ENCODE measurements at regions of chr12 and their contacts with region 1.

Region 1: GRCh38 chr12:124518051-124518932 is 49.1 kb downstream of the NCOR2 start:
- DNase-seq: peak; percentile 95 to 99
- ATAC-seq: peak; percentile 75 to 84
- H3K4me3 ChIP-seq: peak overlapping the region; percentile 53 to 59 (median 54)
- H3K27ac ChIP-seq: peak overlapping the region; percentile 90 to 99 (median 96)
- H3K4me1 ChIP-seq: peaks cover 83 to 94% of the 10 kb centered on the region in 2 donors
- H3K27me3 ChIP-seq: no peaks in the 10 kb centered on the region
- CTCF ChIP-seq: no peak
- POLR2A ChIP-seq: peak; percentile 45 to 65

Region 2: DNA sequence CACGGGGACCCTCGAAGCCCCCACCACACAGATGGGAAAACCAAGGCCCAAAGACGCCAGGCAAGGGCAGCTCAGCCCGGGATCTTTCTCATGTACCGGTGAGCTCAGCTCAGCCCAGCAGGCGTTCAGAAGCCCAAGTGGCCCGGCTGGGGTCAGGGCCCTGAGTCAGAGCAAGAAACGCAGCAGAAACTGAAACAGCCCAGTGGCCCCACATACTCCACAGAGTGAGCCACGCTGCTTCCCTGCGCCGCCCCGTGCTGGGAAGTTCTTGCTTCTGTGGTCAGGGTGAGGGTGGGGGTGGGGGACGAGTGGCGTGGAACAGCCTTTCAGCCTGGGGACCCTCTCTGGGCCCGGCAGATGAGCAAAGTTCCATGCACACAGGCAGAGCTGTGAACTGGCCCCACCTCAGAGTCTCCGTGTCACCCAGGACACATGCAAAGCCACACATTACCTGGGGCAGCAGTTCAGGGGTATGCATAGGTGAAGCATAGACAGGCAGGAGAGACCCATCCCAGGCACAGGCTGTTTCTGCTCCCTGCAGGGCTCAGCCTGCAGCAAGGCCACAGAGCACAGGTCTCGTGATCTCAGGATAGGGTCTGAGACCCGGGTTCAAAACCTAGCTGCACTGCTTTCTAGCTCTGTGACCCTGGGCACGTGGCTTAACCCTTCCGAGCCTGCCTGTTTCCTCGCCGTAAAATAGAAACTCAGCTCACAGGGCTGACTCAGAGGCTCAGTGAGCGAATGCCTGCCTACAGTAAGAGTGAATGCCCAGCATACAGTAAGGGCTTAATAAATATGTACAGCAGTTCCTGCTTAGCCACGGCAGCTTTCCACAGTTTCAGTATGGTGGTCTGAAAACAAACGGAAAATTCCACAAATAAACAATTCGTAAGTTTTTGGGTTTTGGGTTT is 27.5 kb after region 1 on chr12:
- in situ Hi-C with region 1: no loop called
- intact Hi-C with region 1: no loop called
- DNase-seq: no peak
- ATAC-seq: no peak
- H3K4me3 ChIP-seq: no peak overlapping the region
- H3K27ac ChIP-seq: no peak overlapping the region
- H3K4me1 ChIP-seq: peaks cover 43 to 59% of the 10 kb centered on the region in 2 donors
- H3K27me3 ChIP-seq: no peaks in the 10 kb centered on the region
- CTCF ChIP-seq: no peak
- POLR2A ChIP-seq: no peak

Region 3: DNA sequence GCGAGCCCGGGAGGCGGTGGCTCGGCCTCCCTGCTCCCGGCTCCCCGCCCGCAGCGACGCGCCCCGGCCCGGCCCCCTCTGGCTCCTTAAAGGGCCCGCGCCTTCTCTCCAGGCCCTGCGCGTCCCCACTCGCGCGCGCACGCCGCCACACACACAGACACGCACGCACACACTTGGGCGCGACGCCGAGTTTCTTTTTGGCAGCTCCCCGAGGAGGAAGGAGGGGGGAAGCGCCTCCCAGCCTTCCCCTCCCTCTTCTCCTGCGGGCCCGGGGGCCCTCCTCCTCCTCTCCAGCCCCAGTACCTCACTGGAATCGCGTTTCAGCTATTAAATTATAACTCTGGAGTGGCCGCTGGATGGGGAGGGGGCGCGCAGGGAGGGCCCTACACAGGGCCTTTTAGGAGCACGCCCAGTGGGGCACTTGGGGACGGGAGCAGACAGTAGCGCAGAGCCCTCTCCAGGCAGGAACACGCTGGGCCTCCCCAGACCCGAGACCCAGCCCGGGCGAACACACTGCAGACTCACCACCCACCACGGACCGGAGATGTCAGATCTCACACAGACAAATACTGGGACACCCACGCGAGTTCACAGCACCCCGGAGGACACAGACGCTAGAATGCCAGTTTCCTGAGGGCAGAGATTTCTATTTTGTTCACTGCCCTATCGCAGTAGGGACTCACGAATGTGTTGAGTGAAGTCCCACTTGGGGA is 49.5 kb after region 1 on chr12:
- in situ Hi-C with region 1: no loop called
- intact Hi-C with region 1: loop called (anchors 2 kb)
- DNase-seq: peak; percentile 81 to 86
- ATAC-seq: peak; percentile 76 to 79
- H3K4me3 ChIP-seq: peak overlapping the region; percentile 58 to 93 (median 68)
- H3K27ac ChIP-seq: peak overlapping the region; percentile 91 to 98 (median 93)
- H3K4me1 ChIP-seq: peaks cover 27 to 38% of the 10 kb centered on the region in 2 donors
- H3K27me3 ChIP-seq: no peaks in the 10 kb centered on the region
- CTCF ChIP-seq: peak in 2 of 5 experiments; percentile 11 to 30
- POLR2A ChIP-seq: no peak

Region 4: DNA sequence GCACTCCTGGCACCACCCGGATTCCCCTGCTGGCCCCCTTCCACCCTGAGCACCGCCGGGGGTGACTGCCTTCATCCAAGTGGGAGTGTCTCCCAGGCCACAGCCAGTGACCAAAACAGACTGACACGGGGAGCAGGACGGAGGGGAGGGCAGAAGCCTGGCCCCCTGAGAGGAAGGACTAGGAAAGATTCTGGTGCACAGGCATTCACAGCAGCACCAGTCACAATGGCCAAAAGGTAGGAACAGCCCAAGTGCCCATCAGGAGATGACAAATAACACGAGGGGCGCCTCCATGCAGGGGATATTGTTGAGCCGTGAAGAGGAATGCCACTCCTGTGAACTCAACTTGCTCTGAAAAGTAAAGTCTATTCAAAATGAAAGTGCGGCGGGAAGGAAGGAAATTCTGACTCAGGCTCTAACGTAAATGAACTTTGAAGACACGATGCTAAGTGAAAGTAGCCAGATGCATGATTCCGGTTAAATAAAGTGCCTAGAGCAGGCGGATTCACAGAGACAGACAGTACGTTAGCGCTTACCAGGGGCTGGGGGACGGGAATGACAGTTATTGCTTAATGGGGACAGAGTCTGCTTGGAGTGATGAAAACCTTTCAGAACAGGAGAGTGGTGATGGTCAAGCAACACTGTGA is 195.3 kb after region 1 on chr12:
- in situ Hi-C with region 1: no loop called
- intact Hi-C with region 1: no loop called
- DNase-seq: no peak
- ATAC-seq: peak; percentile 63 to 69
- H3K4me3 ChIP-seq: peak overlapping the region; percentile 12 to 53 (median 28)
- H3K27ac ChIP-seq: peak overlapping the region; percentile 70 to 85 (median 75)
- H3K4me1 ChIP-seq: peaks cover 6 to 17% of the 10 kb centered on the region in 2 donors
- H3K27me3 ChIP-seq: no peaks in the 10 kb centered on the region
- CTCF ChIP-seq: no peak
- POLR2A ChIP-seq: peak; percentile 24 to 42

Region 5: GRCh38 chr12:124745891-124746570 is 227.7 kb after region 1 on chr12:
- in situ Hi-C with region 1: no loop called
- intact Hi-C with region 1: loop called (anchors 5 kb)
- DNase-seq: peak; percentile 91 to 92
- ATAC-seq: peak; percentile 80 to 86
- H3K4me3 ChIP-seq: peak overlapping the region in 1 of 4 donors; percentile 22
- H3K27ac ChIP-seq: peak overlapping the region; percentile 75 to 93 (median 89)
- H3K4me1 ChIP-seq: peaks cover 25 to 32% of the 10 kb centered on the region in 2 donors
- H3K27me3 ChIP-seq: no peaks in the 10 kb centered on the region
- CTCF ChIP-seq: no peak
- POLR2A ChIP-seq: peak in 1 of 2 donors; percentile 10

Measured in gastrocnemius medialis (tissue), 4 donors.